AG04449 (cell line): ENCODE measurements at regions of chr3 and their contacts with region 1.

Region 1: DNA sequence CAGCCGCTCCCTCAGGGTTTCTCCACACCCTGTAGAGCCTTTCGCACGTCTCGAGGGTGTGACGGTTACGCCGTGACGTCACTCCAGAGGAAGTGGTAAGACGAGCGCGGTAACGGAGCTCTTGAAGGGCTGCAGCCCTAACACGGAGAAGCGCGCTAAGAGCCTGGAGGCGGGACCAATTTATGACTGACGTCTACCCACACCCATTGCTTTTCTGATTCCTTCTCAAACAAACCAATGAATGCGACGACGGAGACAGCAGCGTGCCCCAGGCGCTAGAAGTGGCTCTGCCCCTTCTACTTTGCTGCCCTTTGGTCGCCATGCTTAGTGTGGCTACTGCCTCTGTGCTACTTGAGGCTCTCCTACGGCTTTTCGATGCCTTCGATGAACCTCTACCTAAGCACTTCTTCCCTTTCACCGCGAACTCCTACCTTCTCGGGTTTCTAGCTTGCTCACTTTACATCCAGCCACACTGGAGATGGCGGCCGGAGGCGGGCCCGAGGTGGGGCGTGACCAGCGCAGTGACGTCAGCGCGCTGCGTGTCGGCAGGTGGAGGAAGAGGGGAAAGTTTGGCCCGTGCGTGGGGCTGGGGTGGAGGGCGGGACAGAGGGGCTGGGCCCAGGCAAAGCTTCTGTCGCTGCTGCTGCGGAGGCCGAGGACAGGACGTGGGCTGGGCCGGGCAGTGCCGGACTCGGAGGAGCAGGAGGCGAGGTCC is at the start of gene OXSR1:
- DNase-seq: peak; percentile 98
- H3K4me3 ChIP-seq: peak within 1 kb of the TSS; percentile 79
- CTCF ChIP-seq: no peak

Region 2: DNA sequence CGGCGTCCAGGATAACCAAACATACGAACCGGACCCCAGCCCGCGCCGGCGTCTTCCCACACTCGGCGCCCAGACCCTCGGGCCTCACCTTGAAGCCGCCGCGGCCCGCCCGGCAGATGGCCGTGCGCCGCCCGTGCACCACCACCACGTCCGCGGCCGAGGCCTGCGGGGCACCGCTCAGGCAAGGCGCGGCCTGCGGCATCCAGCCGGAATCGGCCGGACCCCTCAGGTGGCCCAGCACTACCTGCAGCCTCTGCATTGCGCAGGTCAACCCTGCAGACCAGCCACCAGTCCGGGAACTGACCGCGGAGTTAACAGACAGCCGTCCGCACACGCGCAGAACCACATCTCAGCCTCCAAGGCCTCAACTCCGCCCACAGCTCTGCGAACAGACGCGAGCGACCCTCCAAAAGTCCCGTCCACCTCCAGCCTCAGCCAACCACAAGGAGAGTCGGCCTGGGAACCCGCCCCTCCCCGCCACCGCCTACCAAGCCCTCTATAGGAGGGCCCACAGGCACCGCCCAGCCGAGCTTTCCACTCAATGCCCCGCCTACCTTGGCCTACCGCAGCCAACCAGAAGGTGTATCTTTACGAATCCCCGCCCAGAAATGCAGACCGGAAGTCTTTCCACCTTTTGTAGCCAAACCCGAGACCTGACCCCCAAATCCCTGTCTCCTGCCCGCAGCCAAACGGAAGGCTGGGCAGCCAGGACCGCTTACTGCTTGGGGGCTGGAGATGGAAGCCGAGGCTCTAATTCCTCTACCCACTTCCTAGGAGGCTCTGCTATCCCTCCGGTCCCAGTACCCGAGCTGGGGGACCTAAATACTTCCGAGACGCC is 28.1 kb before region 1 on chr3 and contains the start of gene ACAA1:
- CTCF ChIA-PET with region 1: interaction called, 8 read pairs
- POLR2A ChIA-PET with region 1: interaction called, 24 read pairs
- DNase-seq: peak; percentile 90
- H3K4me3 ChIP-seq: peak within 1 kb of the TSS; percentile 90
- CTCF ChIP-seq: no peak